ENCODE measurements at regions of chr6 and their contacts with region 1.

Region 1: GRCh38 chr6:62345962-62346689 is 60.1 kb upstream of the KHDRBS2 start:
- DNase-seq: no peak
- H3K4me3 ChIP-seq: no peak overlapping the region
- H3K27ac ChIP-seq: no peak overlapping the region
- H3K4me1 ChIP-seq: no peaks in the 10 kb centered on the region
- H3K27me3 ChIP-seq: no peaks in the 10 kb centered on the region

Region 2: GRCh38 chr6:62429781-62430180 is 83.7 kb after region 1 on chr6:
- CTCF ChIA-PET with region 1: no interaction called
- POLR2A ChIA-PET with region 1: interaction called, 12 read pairs
- DNase-seq: no peak
- H3K4me3 ChIP-seq: no peak overlapping the region
- H3K27ac ChIP-seq: no peak overlapping the region
- H3K4me1 ChIP-seq: no peaks in the 10 kb centered on the region
- H3K27me3 ChIP-seq: no peaks in the 10 kb centered on the region

Region 3: DNA sequence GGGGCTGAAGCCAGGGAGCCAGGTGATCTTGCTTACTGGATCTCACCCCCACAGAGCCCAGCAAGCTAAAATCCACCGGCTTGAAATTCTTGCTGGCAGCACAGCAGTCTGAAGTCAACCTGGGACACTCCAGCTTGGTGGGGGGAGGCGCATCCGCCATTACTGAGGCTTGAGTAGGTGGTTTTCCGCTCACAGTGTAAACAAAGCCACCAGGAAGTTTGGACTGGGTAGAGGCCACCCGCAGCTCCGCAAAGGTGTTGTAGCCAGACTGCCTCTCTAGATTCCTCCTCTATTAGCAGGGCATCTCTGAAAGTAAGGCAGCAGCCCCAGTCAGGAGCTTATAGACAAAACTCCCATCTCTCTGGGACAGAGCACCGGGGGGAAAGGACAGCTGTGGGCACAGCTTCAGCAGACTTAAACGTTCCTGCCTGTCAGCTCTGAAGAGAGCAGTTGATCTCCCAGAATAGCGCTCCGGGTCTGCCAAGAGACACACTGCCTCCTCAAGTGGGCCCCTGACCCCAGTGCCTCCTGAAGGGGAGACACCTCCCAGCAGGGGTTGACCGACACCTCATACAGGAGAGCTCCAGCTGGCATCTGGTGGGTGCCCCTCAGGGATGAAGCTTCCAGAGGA is 146.2 kb after region 1 on chr6:
- CTCF ChIA-PET with region 1: no interaction called
- POLR2A ChIA-PET with region 1: no interaction called
- DNase-seq: no peak
- H3K4me3 ChIP-seq: no peak overlapping the region
- H3K27ac ChIP-seq: no peak overlapping the region
- H3K4me1 ChIP-seq: no peaks in the 10 kb centered on the region
- H3K27me3 ChIP-seq: no peaks in the 10 kb centered on the region

Measured in common myeloid progenitor, CD34-positive (primary cell).